Body of pancreas (tissue), 4 donors: ENCODE measurements at regions of chr3 and their contacts with region 1.

Region 1: DNA sequence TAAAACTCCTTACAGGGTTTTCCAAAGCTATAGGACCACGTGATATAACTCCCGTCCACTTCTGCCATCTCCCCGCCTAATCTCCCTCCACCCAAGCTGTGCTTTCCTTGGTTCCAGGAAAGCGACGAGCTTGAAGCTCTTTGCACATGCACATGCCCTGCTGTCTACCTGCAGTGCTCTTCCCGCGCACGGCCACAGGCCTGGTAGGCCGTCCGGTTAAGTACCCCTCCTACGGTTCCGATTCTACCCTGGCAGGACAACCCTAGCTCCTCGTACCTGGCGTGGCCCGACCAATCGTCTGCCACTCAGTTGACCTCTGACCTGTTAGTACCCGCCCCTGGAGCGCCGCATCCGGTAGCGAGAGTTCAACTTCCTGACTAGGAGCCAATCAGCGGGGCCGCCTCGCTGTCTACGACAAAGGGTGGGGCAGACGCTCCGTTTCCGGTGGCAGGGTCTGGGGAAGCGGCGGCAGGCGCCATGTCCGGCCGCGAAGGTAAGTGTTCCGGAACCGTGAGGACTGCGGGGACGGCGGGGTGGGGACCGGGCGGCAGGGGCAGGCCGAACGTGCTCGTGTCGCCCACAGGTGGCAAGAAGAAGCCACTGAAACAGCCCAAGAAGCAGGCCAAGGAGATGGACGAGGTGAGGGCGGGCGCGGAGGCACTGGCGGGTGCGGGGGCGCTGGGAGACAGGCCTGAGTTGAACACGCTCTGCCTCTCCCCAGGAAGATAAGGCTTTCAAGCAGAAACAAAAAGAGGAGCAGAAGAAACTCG is at the starts of genes CCDC51 and TMA7:
- DNase-seq: peak; percentile 99
- ATAC-seq: peak; percentile 98
- H3K4me3 ChIP-seq: peak within 1 kb of the TSS; percentile 61 to 78
- H3K27ac ChIP-seq: peak within 1 kb of the TSS; percentile 71 to 93 (median 85)
- H3K4me1 ChIP-seq: peaks cover 31% of the 10 kb centered on the region
- H3K27me3 ChIP-seq: no peaks in the 10 kb centered on the region
- CTCF ChIP-seq: no peak
- POLR2A ChIP-seq: peak; percentile 81 to 94 (median 90)
- total RNA-seq, gene CCDC51: 0.33 to 2.6 TPM
- total RNA-seq, gene TMA7: 113 to 156 TPM

Region 2: GRCh38 chr3:48222616-48223513 is 217.1 kb before region 1 on chr3 and contains the start of gene CAMP:
- intact Hi-C with region 1: no loop called
- DNase-seq: peak; percentile 29 to 79 (median 44)
- ATAC-seq: no peak
- H3K4me3 ChIP-seq: no peak within 1 kb of the TSS
- H3K27ac ChIP-seq: no peak within 1 kb of the TSS
- H3K4me1 ChIP-seq: peaks cover 2% of the 10 kb centered on the region
- H3K27me3 ChIP-seq: no peaks in the 10 kb centered on the region
- CTCF ChIP-seq: no peak
- POLR2A ChIP-seq: no peak
- total RNA-seq, gene CAMP: not detected

Region 3: GRCh38 chr3:48273594-48274211 is 166.3 kb before region 1 on chr3:
- intact Hi-C with region 1: loop called (anchors 2 kb)
- DNase-seq: peak; percentile 67 to 75 (median 70)
- ATAC-seq: peak; percentile 84
- H3K4me3 ChIP-seq: no peak overlapping the region
- H3K27ac ChIP-seq: no peak overlapping the region
- H3K4me1 ChIP-seq: peaks cover 18% of the 10 kb centered on the region
- H3K27me3 ChIP-seq: no peaks in the 10 kb centered on the region
- CTCF ChIP-seq: peak; percentile 62 to 94 (median 82)
- POLR2A ChIP-seq: no peak

Region 4: DNA sequence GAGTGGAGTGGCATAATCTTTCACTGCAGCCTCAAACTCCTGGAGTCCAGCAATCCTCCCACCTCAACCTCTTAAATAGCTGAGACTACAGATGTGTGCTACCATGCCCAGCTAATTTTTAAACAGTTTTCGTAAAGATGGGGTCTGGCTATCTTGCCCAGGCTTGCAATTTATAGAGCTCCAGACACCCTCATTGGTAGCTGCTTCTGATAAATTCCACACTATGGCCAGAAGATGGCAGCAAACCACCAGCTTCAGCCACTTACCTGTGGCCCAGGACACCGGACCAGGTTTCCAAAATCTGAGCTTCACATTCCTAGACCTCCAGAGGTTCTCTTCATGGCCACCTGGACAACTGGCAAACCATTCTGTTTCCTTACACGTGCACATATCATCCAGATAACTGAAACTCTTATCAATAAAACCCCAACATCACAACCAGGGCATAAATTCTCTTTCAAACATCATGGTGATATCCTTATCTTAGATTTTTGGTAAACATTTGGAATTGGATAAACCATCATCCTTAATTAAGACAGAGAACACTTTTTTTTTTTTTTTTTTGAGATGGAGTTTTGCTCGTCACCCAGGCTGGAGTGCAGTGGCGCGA is 39.1 kb before region 1 on chr3:
- intact Hi-C with region 1: loop called (anchors 5 kb)
- DNase-seq: peak; percentile 71 to 80 (median 74)
- ATAC-seq: peak; percentile 66
- H3K4me3 ChIP-seq: no peak overlapping the region
- H3K27ac ChIP-seq: peak overlapping the region in 1 of 4 donors; percentile 38
- H3K4me1 ChIP-seq: peaks cover 35% of the 10 kb centered on the region
- H3K27me3 ChIP-seq: no peaks in the 10 kb centered on the region
- CTCF ChIP-seq: peak; percentile 39 to 92 (median 89)
- POLR2A ChIP-seq: no peak